HCT116 (cell line): ENCODE measurements at regions of chr9 and their contacts with region 1.

Region 1: DNA sequence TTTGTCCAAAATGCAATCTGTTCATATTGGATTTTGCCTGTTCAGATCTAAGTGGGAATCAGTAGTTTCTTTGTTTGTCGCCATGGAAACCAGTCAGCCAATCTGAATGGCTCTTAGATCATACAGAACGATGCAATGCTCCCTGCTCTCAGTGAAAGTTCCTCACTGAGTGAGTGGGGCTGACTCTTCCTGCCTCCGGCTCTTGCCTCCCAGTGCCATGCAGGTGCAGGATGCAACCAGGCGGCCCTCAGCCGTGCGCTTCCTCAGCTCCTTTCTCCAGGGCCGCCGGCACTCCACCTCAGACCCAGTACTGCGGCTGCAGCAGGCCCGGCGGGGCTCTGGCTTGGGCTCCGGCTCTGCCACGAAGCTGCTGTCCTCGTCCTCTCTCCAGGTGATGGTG is at the start of gene PTPDC1:
- DNase-seq: peak; percentile 77
- ATAC-seq: no peak
- H3K4me3 ChIP-seq: peak within 1 kb of the TSS in 1 of 2 experiments; percentile 28; a peak in 2 of 4 replicates
- H3K27ac ChIP-seq: peak within 1 kb of the TSS; percentile 42
- H3K4me1 ChIP-seq: peaks cover 33% of the 10 kb centered on the region in 2 experiments
- H3K27me3 ChIP-seq: no peaks in the 10 kb centered on the region
- CTCF ChIP-seq: no peak
- POLR2A ChIP-seq: no peak
- RAD21 ChIP-seq: no peak
- total RNA-seq, gene PTPDC1: 12.7 TPM

Region 2: GRCh38 chr9:94065535-94065961 is 18.8 kb before region 1 on chr9:
- CTCF ChIA-PET with region 1: interaction called, 4 read pairs
- POLR2A ChIA-PET with region 1: interaction called, 10 read pairs
- RAD21 ChIA-PET with region 1: interaction called in 1 of 2 experiments, 3 read pairs
- intact Hi-C with region 1: no loop called
- DNase-seq: peak; percentile 76
- ATAC-seq: peak; percentile 96
- H3K4me3 ChIP-seq: no peak overlapping the region
- H3K27ac ChIP-seq: no peak overlapping the region
- H3K4me1 ChIP-seq: peaks cover 0 to 4% of the 10 kb centered on the region in 2 experiments; a peak in 1 of 4 replicates
- H3K27me3 ChIP-seq: no peaks in the 10 kb centered on the region
- CTCF ChIP-seq: peak; percentile 72 to 94 (median 83); a peak in 5 of 6 replicates
- POLR2A ChIP-seq: no peak
- RAD21 ChIP-seq: peak; percentile 87

Region 3: GRCh38 chr9:94097788-94098414 is 13.6 kb after region 1 on chr9:
- CTCF ChIA-PET with region 1: interaction called, 3 read pairs
- POLR2A ChIA-PET with region 1: interaction called, 19 read pairs
- RAD21 ChIA-PET with region 1: no interaction called
- intact Hi-C with region 1: no loop called
- DNase-seq: peak; percentile 75
- ATAC-seq: peak; percentile 95
- H3K4me3 ChIP-seq: peak overlapping the region in 1 of 2 experiments; percentile 9; a peak in 2 of 4 replicates
- H3K27ac ChIP-seq: peak overlapping the region; percentile 53
- H3K4me1 ChIP-seq: peaks cover 27 to 28% of the 10 kb centered on the region in 2 experiments
- H3K27me3 ChIP-seq: no peaks in the 10 kb centered on the region
- CTCF ChIP-seq: no peak
- POLR2A ChIP-seq: no peak
- RAD21 ChIP-seq: no peak

Region 4: GRCh38 chr9:94166237-94166963 is 82.1 kb after region 1 on chr9:
- CTCF ChIA-PET with region 1: no interaction called
- POLR2A ChIA-PET with region 1: interaction called, 10 read pairs
- RAD21 ChIA-PET with region 1: no interaction called
- intact Hi-C with region 1: loop called (anchors 1 kb)
- DNase-seq: peak; percentile 98
- ATAC-seq: peak; percentile 76
- H3K4me3 ChIP-seq: peak overlapping the region; percentile 74 to 79
- H3K27ac ChIP-seq: peak overlapping the region; percentile 99
- H3K4me1 ChIP-seq: peaks cover 8 to 24% of the 10 kb centered on the region in 2 experiments
- H3K27me3 ChIP-seq: no peaks in the 10 kb centered on the region
- CTCF ChIP-seq: no peak
- POLR2A ChIP-seq: peak; percentile 18
- RAD21 ChIP-seq: no peak